ENCODE measurements at regions of chrX and their contacts with region 1.

Region 1: GRCh38 chrX:71622576-71623450 is 4.5 kb upstream of the CXCR3 start:
- DNase-seq: peak; percentile 81 to 89 (median 82)
- H3K4me3 ChIP-seq: peak overlapping the region in 1 of 2 donors; percentile 28
- H3K4me3 Mint-ChIP-seq: peak overlapping the region; percentile 69 to 87 (median 80)
- H3K27ac ChIP-seq: peak overlapping the region; percentile 75
- H3K27ac Mint-ChIP-seq: peak overlapping the region; percentile 91 to 97 (median 96)
- H3K4me1 ChIP-seq: peaks cover 82% of the 10 kb centered on the region
- H3K4me1 Mint-ChIP-seq: peaks cover 27 to 73% (median 61%) of the 10 kb centered on the region in 4 donors
- H3K27me3 ChIP-seq: no peaks in the 10 kb centered on the region
- H3K27me3 Mint-ChIP-seq: peaks cover 0 to 2% of the 10 kb centered on the region in 2 donors

Region 2: DNA sequence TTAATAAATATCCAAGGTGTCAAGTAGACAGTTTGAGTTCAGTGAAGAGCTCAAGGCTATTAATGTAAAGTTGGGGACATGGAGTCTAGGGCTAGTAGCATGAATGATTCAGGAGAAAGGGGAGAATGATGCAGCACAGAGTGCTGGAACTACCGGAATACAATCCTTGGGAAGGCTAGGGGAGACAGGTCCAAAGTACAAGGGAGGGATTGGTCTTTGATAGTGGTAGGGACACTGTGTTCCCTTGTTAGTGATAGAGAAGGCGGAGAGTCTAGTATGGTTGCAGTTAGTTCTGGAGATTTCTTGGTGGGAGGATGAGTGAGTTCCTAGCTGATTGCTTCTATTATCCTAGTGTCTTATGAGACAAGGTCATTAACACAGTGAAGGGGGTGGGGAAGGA is 35.9 kb before region 1 on chrX:
- CTCF ChIA-PET with region 1: no interaction called
- POLR2A ChIA-PET with region 1: no interaction called
- intact Hi-C with region 1: no loop called
- DNase-seq: no peak
- H3K4me3 ChIP-seq: no peak overlapping the region
- H3K4me3 Mint-ChIP-seq: no peak overlapping the region
- H3K27ac ChIP-seq: no peak overlapping the region
- H3K27ac Mint-ChIP-seq: peak overlapping the region in 3 of 7 donors; percentile 0 to 62 (median 33)
- H3K4me1 ChIP-seq: no peaks in the 10 kb centered on the region
- H3K4me1 Mint-ChIP-seq: peaks cover 0 to 3% (median 2%) of the 10 kb centered on the region in 4 donors
- H3K27me3 ChIP-seq: no peaks in the 10 kb centered on the region
- H3K27me3 Mint-ChIP-seq: no peaks in the 10 kb centered on the region

Region 3: GRCh38 chrX:71606536-71607216 is 16.1 kb before region 1 on chrX:
- CTCF ChIA-PET with region 1: interaction called, 9 read pairs
- POLR2A ChIA-PET with region 1: interaction called, 15 read pairs
- intact Hi-C with region 1: loop called (anchors 2 kb)
- DNase-seq: peak in 4 of 5 donors; percentile 35 to 71 (median 46)
- H3K4me3 ChIP-seq: no peak overlapping the region
- H3K4me3 Mint-ChIP-seq: peak overlapping the region in 7 of 8 donors; percentile 10 to 75 (median 55)
- H3K27ac ChIP-seq: peak overlapping the region; percentile 51
- H3K27ac Mint-ChIP-seq: peak overlapping the region; percentile 68 to 93 (median 90)
- H3K4me1 ChIP-seq: peaks cover 44% of the 10 kb centered on the region
- H3K4me1 Mint-ChIP-seq: peaks cover 41 to 74% (median 51%) of the 10 kb centered on the region in 4 donors
- H3K27me3 ChIP-seq: no peaks in the 10 kb centered on the region
- H3K27me3 Mint-ChIP-seq: no peaks in the 10 kb centered on the region

Region 4: DNA sequence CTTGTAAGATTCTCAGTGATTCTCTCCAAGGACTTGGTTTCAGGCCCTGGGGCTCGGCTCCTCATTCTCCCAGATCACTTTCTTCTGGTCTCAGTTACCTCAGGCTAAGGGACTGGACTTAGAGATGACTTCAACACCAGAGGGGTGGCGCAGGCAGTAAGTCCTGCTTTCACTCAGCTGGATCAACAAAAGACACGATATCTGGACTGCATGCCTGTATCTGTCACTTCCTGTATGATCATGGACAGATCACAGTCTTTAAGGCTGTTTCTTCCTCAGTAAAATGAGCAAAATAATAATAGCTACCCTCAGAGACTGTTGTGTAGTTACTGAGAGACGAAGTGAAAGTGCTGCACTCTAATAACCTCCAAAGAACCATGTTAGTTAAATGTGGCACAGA is 15.0 kb after region 1 on chrX:
- CTCF ChIA-PET with region 1: interaction called, 7 read pairs
- POLR2A ChIA-PET with region 1: interaction called, 63 read pairs
- intact Hi-C with region 1: loop called (anchors 2 kb)
- DNase-seq: no peak
- H3K4me3 ChIP-seq: peak overlapping the region in 1 of 2 donors; percentile 18
- H3K4me3 Mint-ChIP-seq: no peak overlapping the region
- H3K27ac ChIP-seq: peak overlapping the region; percentile 36
- H3K27ac Mint-ChIP-seq: no peak overlapping the region
- H3K4me1 ChIP-seq: peaks cover 42% of the 10 kb centered on the region
- H3K4me1 Mint-ChIP-seq: peaks cover 8 to 19% (median 14%) of the 10 kb centered on the region in 4 donors
- H3K27me3 ChIP-seq: no peaks in the 10 kb centered on the region
- H3K27me3 Mint-ChIP-seq: no peaks in the 10 kb centered on the region